ENCODE measurements at regions of chrX and their contacts with region 1.

Region 1: DNA sequence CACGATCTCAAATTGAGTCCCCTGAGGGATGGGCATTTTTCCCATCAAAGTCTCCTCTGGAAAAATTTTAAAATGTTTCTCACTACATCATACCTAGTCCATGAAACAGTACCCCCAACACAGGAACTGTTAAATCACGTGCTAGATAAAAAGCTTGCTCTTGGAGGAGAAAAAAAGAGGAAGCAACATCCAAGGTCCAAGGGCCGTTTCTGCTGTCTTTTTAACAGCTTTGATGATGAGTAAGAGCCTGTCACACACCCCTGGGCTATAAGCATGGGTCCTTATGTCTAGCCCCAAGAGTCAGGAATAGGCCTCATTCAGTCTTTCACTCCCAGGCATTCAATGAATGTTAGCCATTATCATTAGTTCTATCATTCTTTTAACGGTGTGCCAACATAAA is 128.9 kb downstream of the SH3KBP1 start:
- DNase-seq: no peak
- H3K4me3 ChIP-seq: no peak overlapping the region
- H3K27ac ChIP-seq: no peak overlapping the region
- H3K4me1 ChIP-seq: no peaks in the 10 kb centered on the region
- H3K27me3 ChIP-seq: no peaks in the 10 kb centered on the region
- CTCF ChIP-seq: no peak
- POLR2A ChIP-seq: no peak

Region 2: GRCh38 chrX:19698125-19698524 is 60.4 kb before region 1 on chrX:
- intact Hi-C with region 1: no loop called
- DNase-seq: peak; percentile 59 to 63
- H3K4me3 ChIP-seq: no peak overlapping the region
- H3K27ac ChIP-seq: no peak overlapping the region
- H3K4me1 ChIP-seq: no peaks in the 10 kb centered on the region
- H3K27me3 ChIP-seq: no peaks in the 10 kb centered on the region
- CTCF ChIP-seq: no peak
- POLR2A ChIP-seq: no peak

Region 3: GRCh38 chrX:19799319-19800182 is 41.0 kb after region 1 on chrX:
- intact Hi-C with region 1: no loop called
- DNase-seq: peak; percentile 12 to 19
- H3K4me3 ChIP-seq: no peak overlapping the region
- H3K27ac ChIP-seq: peak overlapping the region in 2 of 3 donors; percentile 29 to 43
- H3K4me1 ChIP-seq: peaks cover 0 to 5% of the 10 kb centered on the region in 2 donors
- H3K27me3 ChIP-seq: no peaks in the 10 kb centered on the region
- CTCF ChIP-seq: no peak
- POLR2A ChIP-seq: no peak

Region 4: DNA sequence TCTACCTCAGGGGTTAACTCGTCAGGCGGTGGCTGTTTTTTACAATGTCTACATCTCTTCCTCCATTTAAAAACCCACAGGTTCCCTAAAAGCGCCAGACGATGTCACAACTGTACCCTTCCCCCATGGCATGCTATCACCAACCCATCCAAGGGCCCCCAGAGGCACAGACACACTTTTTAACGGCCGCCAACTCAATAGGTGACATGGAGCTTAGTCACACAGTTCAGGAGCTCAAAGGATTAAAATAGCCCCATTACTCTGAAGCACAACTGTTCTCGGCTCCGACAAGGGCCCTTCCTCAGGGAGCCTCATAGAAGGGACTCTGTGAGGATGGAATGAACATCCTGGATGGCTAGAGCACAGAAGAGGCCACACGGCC is 116.5 kb after region 1 on chrX:
- intact Hi-C with region 1: loop called (anchors 10 kb)
- DNase-seq: no peak
- H3K4me3 ChIP-seq: no peak overlapping the region
- H3K27ac ChIP-seq: no peak overlapping the region
- H3K4me1 ChIP-seq: no peaks in the 10 kb centered on the region
- H3K27me3 ChIP-seq: no peaks in the 10 kb centered on the region
- CTCF ChIP-seq: no peak
- POLR2A ChIP-seq: no peak